CD8-positive, alpha-beta memory T cell (primary cell): ENCODE measurements at regions of chr1 and their contacts with region 1.

Region 1: DNA sequence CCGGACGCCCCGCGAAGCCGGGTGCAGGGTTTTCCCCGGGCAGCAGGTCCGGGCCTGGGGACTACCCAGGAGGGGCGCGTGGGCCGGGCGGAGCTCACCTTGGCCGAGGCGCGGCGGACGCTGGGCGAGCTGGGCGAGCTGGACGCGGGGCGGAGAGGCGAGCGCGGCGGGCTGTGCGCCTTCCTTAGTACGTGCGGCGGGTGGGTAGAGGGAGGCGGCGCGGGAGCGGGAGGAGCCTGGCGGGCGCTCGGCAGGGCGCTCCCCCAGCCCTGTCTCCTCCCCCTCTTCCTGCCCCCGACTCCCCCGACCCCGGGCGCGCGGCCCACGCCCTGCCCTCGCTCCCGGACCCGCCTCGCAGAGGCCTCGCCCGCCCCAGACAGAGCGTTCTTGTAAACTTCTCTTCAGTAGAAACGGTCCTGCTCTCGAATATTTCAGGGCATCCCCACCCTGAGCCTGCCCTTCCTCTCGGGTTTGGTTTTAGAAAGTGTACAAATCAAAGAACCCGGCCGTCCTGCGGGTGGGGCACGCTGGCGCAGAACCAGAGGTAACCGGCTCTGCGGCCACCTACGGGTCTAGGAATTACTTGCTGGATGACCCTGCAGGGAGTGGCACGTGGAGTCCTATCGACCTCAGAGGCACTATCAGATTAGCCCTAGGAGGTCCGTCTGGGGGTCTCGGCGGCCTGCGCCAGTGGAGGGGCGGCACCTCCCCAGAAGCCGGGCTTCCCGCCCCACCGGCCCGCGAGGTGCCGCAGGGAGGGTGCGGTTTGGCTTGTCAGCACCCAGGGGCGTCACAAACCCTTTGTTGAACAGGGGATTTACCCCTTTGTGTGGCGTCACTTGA is at the start of gene S100A10:
- DNase-seq: peak; percentile 72 to 88 (median 80)
- H3K4me3 ChIP-seq: peak within 1 kb of the TSS; percentile 79
- H3K4me3 Mint-ChIP-seq: peak within 1 kb of the TSS; percentile 96 to 100 (median 97)
- H3K27ac ChIP-seq: peak within 1 kb of the TSS; percentile 87
- H3K27ac Mint-ChIP-seq: peak within 1 kb of the TSS; percentile 96 to 99 (median 98)
- H3K4me1 ChIP-seq: peaks cover 42% of the 10 kb centered on the region
- H3K4me1 Mint-ChIP-seq: peaks cover 48 to 58% (median 49%) of the 10 kb centered on the region in 3 donors
- H3K27me3 ChIP-seq: no peaks in the 10 kb centered on the region
- H3K27me3 Mint-ChIP-seq: no peaks in the 10 kb centered on the region
- total RNA-seq, gene S100A10: 263 to 279 TPM

Region 2: DNA sequence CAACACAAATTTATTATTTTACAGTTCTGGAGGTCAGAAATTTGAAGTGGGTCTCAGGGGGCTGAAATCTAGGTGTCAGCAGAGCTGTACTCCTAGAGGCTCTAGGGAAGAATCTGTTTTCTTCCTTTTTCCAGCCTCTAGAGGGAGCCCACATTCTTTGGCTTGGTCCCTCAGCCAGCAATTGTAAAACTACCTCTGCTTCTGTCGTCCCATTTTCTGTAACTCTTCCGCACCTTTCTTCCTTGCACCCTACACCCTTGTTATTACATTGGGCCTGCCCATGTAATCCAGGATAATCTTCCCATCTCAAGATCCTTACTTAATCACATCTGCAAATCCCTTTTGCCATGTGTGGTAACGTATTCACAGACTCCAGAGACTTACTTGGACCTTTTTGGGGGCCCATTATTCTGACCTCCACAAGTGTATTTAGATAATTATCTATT is 59.8 kb before region 1 on chr1:
- CTCF ChIA-PET with region 1: interaction called, 153 read pairs
- POLR2A ChIA-PET with region 1: no interaction called
- DNase-seq: peak in 4 of 5 donors; percentile 27 to 66 (median 57)
- H3K4me3 ChIP-seq: no peak overlapping the region
- H3K4me3 Mint-ChIP-seq: peak overlapping the region in 1 of 7 donors; percentile 23
- H3K27ac ChIP-seq: no peak overlapping the region
- H3K27ac Mint-ChIP-seq: peak overlapping the region in 2 of 8 donors; percentile 20 to 72
- H3K4me1 ChIP-seq: no peaks in the 10 kb centered on the region
- H3K4me1 Mint-ChIP-seq: peaks cover 2 to 6% (median 3%) of the 10 kb centered on the region in 3 donors
- H3K27me3 ChIP-seq: no peaks in the 10 kb centered on the region
- H3K27me3 Mint-ChIP-seq: peaks cover 4 to 5% of the 10 kb centered on the region in 2 donors